ENCODE measurements at regions of chr10 and their contacts with region 1.

Region 1: GRCh38 chr10:32207544-32207943 is 139.4 kb downstream of the EPC1 start:
- DNase-seq: peak; percentile 63
- ATAC-seq: peak; percentile 57
- H3K4me3 ChIP-seq: no peak overlapping the region
- H3K27ac ChIP-seq: no peak overlapping the region
- H3K4me1 ChIP-seq: no peaks in the 10 kb centered on the region
- H3K27me3 ChIP-seq: no peaks in the 10 kb centered on the region
- CTCF ChIP-seq: peak; percentile 71

Region 2: GRCh38 chr10:31490858-31491504 is 716.6 kb before region 1 on chr10:
- CTCF ChIA-PET with region 1: no interaction called
- POLR2A ChIA-PET with region 1: no interaction called
- intact Hi-C with region 1: no loop called
- DNase-seq: peak; percentile 67
- ATAC-seq: 0 out of 2 replicates have a peak, but pooled peaks have one; percentile 46
- H3K4me3 ChIP-seq: no peak overlapping the region
- H3K27ac ChIP-seq: no peak overlapping the region
- H3K4me1 ChIP-seq: no peaks in the 10 kb centered on the region
- H3K27me3 ChIP-seq: no peaks in the 10 kb centered on the region
- CTCF ChIP-seq: peak; percentile 73

Region 3: GRCh38 chr10:32049113-32049512 is 158.4 kb before region 1 on chr10:
- CTCF ChIA-PET with region 1: no interaction called
- POLR2A ChIA-PET with region 1: no interaction called
- intact Hi-C with region 1: loop called (anchors 10 kb)
- DNase-seq: no peak
- ATAC-seq: no peak; the same call in 1 of the 2 replicates
- H3K4me3 ChIP-seq: no peak overlapping the region
- H3K27ac ChIP-seq: no peak overlapping the region
- H3K4me1 ChIP-seq: peaks cover 36% of the 10 kb centered on the region; the same call in 1 of the 2 replicates
- H3K27me3 ChIP-seq: no peaks in the 10 kb centered on the region
- CTCF ChIP-seq: no peak

Region 4: GRCh38 chr10:32139223-32140073 is 68.1 kb before region 1 on chr10:
- CTCF ChIA-PET with region 1: no interaction called
- POLR2A ChIA-PET with region 1: no interaction called
- intact Hi-C with region 1: loop called (anchors 2 kb)
- DNase-seq: peak; percentile 92
- ATAC-seq: peak; percentile 100
- H3K4me3 ChIP-seq: peak overlapping the region; percentile 33; the same call in 1 of the 2 replicates
- H3K27ac ChIP-seq: peak overlapping the region; percentile 85
- H3K4me1 ChIP-seq: peaks cover 16% of the 10 kb centered on the region
- H3K27me3 ChIP-seq: no peaks in the 10 kb centered on the region
- CTCF ChIP-seq: no peak; the same call in 1 of the 2 replicates

Region 5: GRCh38 chr10:32171204-32171603 is 36.3 kb before region 1 on chr10:
- CTCF ChIA-PET with region 1: no interaction called
- POLR2A ChIA-PET with region 1: no interaction called
- intact Hi-C with region 1: no loop called
- DNase-seq: peak; percentile 74
- ATAC-seq: peak; percentile 57
- H3K4me3 ChIP-seq: no peak overlapping the region
- H3K27ac ChIP-seq: no peak overlapping the region
- H3K4me1 ChIP-seq: peaks cover 10% of the 10 kb centered on the region
- H3K27me3 ChIP-seq: no peaks in the 10 kb centered on the region
- CTCF ChIP-seq: no peak

Region 6: DNA sequence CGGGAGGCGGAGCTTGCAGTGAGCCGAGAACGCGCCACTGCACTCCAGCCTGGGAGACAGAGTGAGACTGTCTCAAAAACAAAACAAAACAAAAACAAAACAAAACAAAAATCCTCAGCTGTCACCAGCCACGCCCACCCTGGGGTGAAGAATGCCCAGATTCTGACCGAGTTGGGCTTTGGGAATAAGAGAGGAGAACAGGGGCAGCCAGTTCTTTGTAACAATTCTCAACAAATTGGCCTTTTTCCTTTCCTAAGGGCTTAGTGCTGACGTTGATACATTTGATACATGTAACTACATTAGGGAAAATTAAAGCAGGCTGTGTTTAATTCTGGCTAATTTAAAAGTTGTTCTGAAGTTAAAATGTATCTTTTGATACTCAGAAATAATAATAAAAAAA is 18.4 kb after region 1 on chr10:
- CTCF ChIA-PET with region 1: interaction called, 10 read pairs
- POLR2A ChIA-PET with region 1: no interaction called
- intact Hi-C with region 1: no loop called
- DNase-seq: no peak
- ATAC-seq: no peak
- H3K4me3 ChIP-seq: no peak overlapping the region
- H3K27ac ChIP-seq: no peak overlapping the region
- H3K4me1 ChIP-seq: no peaks in the 10 kb centered on the region
- H3K27me3 ChIP-seq: no peaks in the 10 kb centered on the region
- CTCF ChIP-seq: no peak